ENCODE measurements at regions of chr4 and their contacts with region 1.

Region 1: GRCh38 chr4:186587416-186588018 is 32.1 kb upstream of the MTNR1A start:
- DNase-seq: peak; percentile 85
- H3K4me3 Mint-ChIP-seq: no peak overlapping the region
- H3K27ac Mint-ChIP-seq: no peak overlapping the region
- H3K4me1 Mint-ChIP-seq: no peaks in the 10 kb centered on the region
- H3K27me3 Mint-ChIP-seq: no peaks in the 10 kb centered on the region

Region 2: GRCh38 chr4:186067757-186068385 is 519.6 kb before region 1 on chr4:
- intact Hi-C with region 1: loop called (anchors 5 kb)
- DNase-seq: peak; percentile 67
- H3K4me3 Mint-ChIP-seq: no peak overlapping the region
- H3K27ac Mint-ChIP-seq: no peak overlapping the region
- H3K4me1 Mint-ChIP-seq: peaks cover 11% of the 10 kb centered on the region
- H3K27me3 Mint-ChIP-seq: peaks cover 26% of the 10 kb centered on the region

Region 3: GRCh38 chr4:186297013-186297645 is 290.4 kb before region 1 on chr4:
- intact Hi-C with region 1: loop called (anchors 1 kb)
- DNase-seq: no peak
- H3K4me3 Mint-ChIP-seq: no peak overlapping the region
- H3K27ac Mint-ChIP-seq: no peak overlapping the region
- H3K4me1 Mint-ChIP-seq: peaks cover 3% of the 10 kb centered on the region
- H3K27me3 Mint-ChIP-seq: peaks cover 9% of the 10 kb centered on the region

Region 4: DNA sequence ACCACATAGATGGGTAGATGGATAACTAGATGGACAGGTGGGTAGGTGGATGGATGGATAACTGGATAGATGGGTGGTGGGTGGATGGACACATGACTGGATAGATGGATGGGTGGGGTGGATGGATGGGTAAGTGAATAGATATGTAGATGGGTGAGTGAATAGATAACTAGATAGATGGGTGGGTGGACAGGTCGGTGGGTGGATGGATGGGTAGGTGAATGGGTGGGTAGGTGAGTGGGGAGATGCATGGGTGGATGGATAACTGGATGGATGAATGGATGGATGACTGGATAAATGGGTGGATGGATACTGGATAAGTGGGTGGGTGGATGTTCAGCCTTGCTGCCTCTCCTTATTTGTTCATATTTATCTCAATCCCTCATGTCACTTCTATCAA is 20.0 kb after region 1 on chr4:
- intact Hi-C with region 1: no loop called
- DNase-seq: no peak
- H3K4me3 Mint-ChIP-seq: no peak overlapping the region
- H3K27ac Mint-ChIP-seq: no peak overlapping the region
- H3K4me1 Mint-ChIP-seq: no peaks in the 10 kb centered on the region
- H3K27me3 Mint-ChIP-seq: no peaks in the 10 kb centered on the region

Region 5: DNA sequence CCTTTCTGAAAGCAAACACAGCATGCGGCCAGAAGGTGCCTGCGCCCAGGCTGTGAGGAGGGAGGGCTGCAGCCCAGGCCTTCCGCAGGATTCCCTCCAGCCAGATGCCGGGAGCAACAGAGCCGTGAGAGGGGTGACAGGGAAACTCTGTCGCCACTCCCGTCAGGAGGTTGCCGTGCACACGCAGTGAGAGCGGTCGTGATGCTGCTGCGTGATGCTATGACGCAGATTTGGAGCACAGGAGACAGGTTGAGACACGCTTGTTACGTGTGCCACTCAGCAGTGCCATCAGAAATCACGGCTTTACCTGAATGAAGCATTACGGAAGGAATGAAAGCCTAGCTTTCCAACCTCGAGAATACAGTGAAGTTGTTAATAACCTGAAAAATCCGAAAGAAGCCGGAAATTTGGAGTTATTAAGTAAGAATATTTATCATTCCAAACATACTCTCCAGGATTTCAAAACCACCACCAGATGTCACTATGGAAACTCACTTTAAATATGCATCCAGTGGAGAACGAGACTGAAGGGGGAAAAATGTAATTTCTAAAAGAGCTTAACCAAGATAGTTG is 81.7 kb after region 1 on chr4:
- intact Hi-C with region 1: no loop called
- DNase-seq: no peak
- H3K4me3 Mint-ChIP-seq: no peak overlapping the region
- H3K27ac Mint-ChIP-seq: no peak overlapping the region
- H3K4me1 Mint-ChIP-seq: no peaks in the 10 kb centered on the region
- H3K27me3 Mint-ChIP-seq: no peaks in the 10 kb centered on the region